Activated CD4-positive, alpha-beta T cell treated with anti-CD3 and anti-CD28 coated beads, Interleukin-2, amount 10 ng/mL, durations not matched to agents 24 days and 14 days (primary cell): ENCODE measurements at regions of chr12 and their contacts with region 1.

Region 1: DNA sequence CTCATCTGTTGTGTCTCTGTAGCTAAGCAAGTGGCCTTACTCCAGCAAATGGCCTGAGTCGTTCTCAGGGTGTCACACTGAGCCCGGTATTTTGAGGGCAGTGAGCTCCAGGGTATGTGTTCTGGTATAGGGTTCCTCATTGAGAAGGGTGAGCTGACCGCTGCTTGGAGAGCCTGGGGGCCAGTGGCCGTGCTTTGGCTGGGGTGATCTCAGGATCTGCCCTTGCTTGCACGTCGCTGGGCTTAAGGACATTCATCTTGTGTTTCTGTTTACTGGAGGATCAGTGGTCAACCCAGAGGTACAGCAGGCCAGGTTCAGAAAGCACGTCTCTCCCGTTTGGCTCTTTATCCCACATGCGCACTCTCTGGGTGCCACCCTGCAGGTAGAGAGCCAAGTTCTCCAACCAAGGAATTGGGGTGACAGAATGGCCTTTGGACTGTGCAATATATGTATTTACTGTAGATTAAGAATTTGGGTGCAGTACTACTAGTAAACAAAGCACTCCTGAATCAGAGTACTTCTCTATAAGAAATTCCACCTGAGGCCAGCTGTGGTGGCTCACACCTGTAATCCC is 52.1 kb downstream of the FBXW8 start:
- DNase-seq: no peak
- H3K4me3 Mint-ChIP-seq: no peak overlapping the region
- H3K27ac Mint-ChIP-seq: no peak overlapping the region
- H3K4me1 Mint-ChIP-seq: peaks cover 39% of the 10 kb centered on the region
- H3K27me3 Mint-ChIP-seq: no peaks in the 10 kb centered on the region

Region 2: GRCh38 chr12:116060764-116061163 is 902.1 kb before region 1 on chr12:
- intact Hi-C with region 1: no loop called
- DNase-seq: peak; percentile 69
- H3K4me3 Mint-ChIP-seq: peak overlapping the region; percentile 81
- H3K27ac Mint-ChIP-seq: peak overlapping the region; percentile 91
- H3K4me1 Mint-ChIP-seq: peaks cover 22% of the 10 kb centered on the region
- H3K27me3 Mint-ChIP-seq: no peaks in the 10 kb centered on the region

Region 3: GRCh38 chr12:116980083-116980482 is 17.2 kb after region 1 on chr12:
- intact Hi-C with region 1: loop called (anchors 1 kb)
- DNase-seq: no peak
- H3K4me3 Mint-ChIP-seq: no peak overlapping the region
- H3K27ac Mint-ChIP-seq: no peak overlapping the region
- H3K4me1 Mint-ChIP-seq: peaks cover 12% of the 10 kb centered on the region
- H3K27me3 Mint-ChIP-seq: no peaks in the 10 kb centered on the region